Prostate gland (tissue), 2 donors: ENCODE measurements at regions of chr3 and their contacts with region 1.

Region 1: GRCh38 chr3:184135149-184135910 is at the start of gene EIF2B5:
- DNase-seq: peak; percentile 88
- H3K4me3 ChIP-seq: peak within 1 kb of the TSS; percentile 68 to 92
- H3K27ac ChIP-seq: peak within 1 kb of the TSS; percentile 94
- H3K4me1 ChIP-seq: peaks cover 16% of the 10 kb centered on the region
- H3K27me3 ChIP-seq: no peaks in the 10 kb centered on the region
- CTCF ChIP-seq: peak; percentile 38 to 80 (median 59)
- POLR2A ChIP-seq: peak; percentile 49
- total RNA-seq, gene EIF2B5: 54.9 to 61.5 TPM

Region 2: GRCh38 chr3:183427876-183428446 is 707.4 kb before region 1 on chr3:
- intact Hi-C with region 1: no loop called
- DNase-seq: peak; percentile 9
- H3K4me3 ChIP-seq: peak overlapping the region; percentile 43 to 56
- H3K27ac ChIP-seq: peak overlapping the region in 1 of 2 donors; percentile 3
- H3K4me1 ChIP-seq: no peaks in the 10 kb centered on the region
- H3K27me3 ChIP-seq: no peaks in the 10 kb centered on the region
- CTCF ChIP-seq: no peak
- POLR2A ChIP-seq: no peak

Region 3: GRCh38 chr3:184174646-184175492 is 39.5 kb after region 1 on chr3 and contains the start of gene AP2M1:
- intact Hi-C with region 1: loop called (anchors 5 kb)
- DNase-seq: peak; percentile 98
- H3K4me3 ChIP-seq: peak within 1 kb of the TSS; percentile 75 to 83
- H3K27ac ChIP-seq: peak within 1 kb of the TSS; percentile 83 to 88
- H3K4me1 ChIP-seq: peaks cover 18% of the 10 kb centered on the region
- H3K27me3 ChIP-seq: no peaks in the 10 kb centered on the region
- CTCF ChIP-seq: no peak
- POLR2A ChIP-seq: peak; percentile 89
- total RNA-seq, gene AP2M1: 183 to 307 TPM

Region 4: GRCh38 chr3:184250167-184250828 is 115.0 kb after region 1 on chr3:
- intact Hi-C with region 1: loop called (anchors 2 kb)
- DNase-seq: peak; percentile 89
- H3K4me3 ChIP-seq: peak overlapping the region; percentile 81 to 97
- H3K27ac ChIP-seq: peak overlapping the region; percentile 20 to 77
- H3K4me1 ChIP-seq: no peaks in the 10 kb centered on the region
- H3K27me3 ChIP-seq: no peaks in the 10 kb centered on the region
- CTCF ChIP-seq: peak; percentile 82 to 87 (median 85)
- POLR2A ChIP-seq: no peak